HCT116 (cell line): ENCODE measurements at regions of chr3 and their contacts with region 1.

Region 1: GRCh38 chr3:114827495-114827894 is 319.6 kb downstream of the ZBTB20 start:
- DNase-seq: peak; percentile 60
- ATAC-seq: peak; percentile 91
- H3K4me3 ChIP-seq: no peak overlapping the region
- H3K27ac ChIP-seq: no peak overlapping the region
- H3K4me1 ChIP-seq: peaks cover 11 to 13% of the 10 kb centered on the region in 2 experiments; a peak in 2 of 4 replicates
- H3K27me3 ChIP-seq: no peaks in the 10 kb centered on the region
- CTCF ChIP-seq: peak; percentile 46 to 76 (median 66); a peak in 5 of 6 replicates
- POLR2A ChIP-seq: no peak
- RAD21 ChIP-seq: peak; percentile 78

Region 2: GRCh38 chr3:114383875-114384557 is 443.5 kb before region 1 on chr3:
- CTCF ChIA-PET with region 1: interaction called, 4 read pairs
- POLR2A ChIA-PET with region 1: no interaction called
- RAD21 ChIA-PET with region 1: no interaction called
- intact Hi-C with region 1: loop called (anchors 2 kb)
- DNase-seq: peak; percentile 47
- ATAC-seq: peak; percentile 85
- H3K4me3 ChIP-seq: no peak overlapping the region
- H3K27ac ChIP-seq: peak overlapping the region; percentile 41; the same call in 1 of the 2 replicates
- H3K4me1 ChIP-seq: peaks cover 26 to 58% of the 10 kb centered on the region in 2 experiments
- H3K27me3 ChIP-seq: no peaks in the 10 kb centered on the region
- CTCF ChIP-seq: peak; percentile 52 to 95 (median 94); a peak in 5 of 6 replicates
- POLR2A ChIP-seq: no peak
- RAD21 ChIP-seq: peak; percentile 92

Region 3: GRCh38 chr3:114668099-114668498 is 159.4 kb before region 1 on chr3:
- CTCF ChIA-PET with region 1: no interaction called
- POLR2A ChIA-PET with region 1: no interaction called
- RAD21 ChIA-PET with region 1: no interaction called
- intact Hi-C with region 1: no loop called
- DNase-seq: no peak
- ATAC-seq: no peak
- H3K4me3 ChIP-seq: no peak overlapping the region
- H3K27ac ChIP-seq: no peak overlapping the region
- H3K4me1 ChIP-seq: peaks cover 19 to 45% of the 10 kb centered on the region in 2 experiments; a peak in 3 of 4 replicates
- H3K27me3 ChIP-seq: no peaks in the 10 kb centered on the region
- CTCF ChIP-seq: no peak
- POLR2A ChIP-seq: no peak
- RAD21 ChIP-seq: no peak

Region 4: DNA sequence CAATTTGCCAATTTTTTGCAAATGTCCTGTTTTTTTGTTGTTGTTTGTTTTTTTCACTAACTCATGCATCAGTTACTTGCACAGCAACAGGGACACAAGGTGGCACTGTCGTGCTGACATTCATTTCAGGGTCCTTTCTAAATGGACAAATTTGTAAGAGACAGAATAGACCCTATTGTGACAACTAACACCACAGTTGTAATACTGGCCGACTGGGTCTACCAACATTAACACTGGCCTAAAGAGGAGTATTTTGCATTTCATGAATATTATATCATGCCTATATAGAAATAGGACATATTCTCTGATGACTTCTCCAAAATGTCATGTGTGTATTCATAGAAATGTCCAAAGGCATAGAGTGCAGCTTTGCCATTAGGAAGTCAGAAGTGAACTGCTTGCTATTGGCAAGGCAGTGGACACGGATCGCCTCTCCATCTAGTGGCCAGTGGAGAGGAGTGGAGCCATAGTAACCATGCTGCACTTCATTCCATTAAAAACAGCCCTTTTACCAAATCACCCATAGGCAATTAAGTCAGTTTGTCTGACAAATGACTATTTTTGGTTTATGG is 264.8 kb after region 1 on chr3:
- CTCF ChIA-PET with region 1: interaction called, 3 read pairs
- POLR2A ChIA-PET with region 1: no interaction called
- RAD21 ChIA-PET with region 1: no interaction called
- intact Hi-C with region 1: loop called (anchors 1 kb)
- DNase-seq: peak; percentile 65
- ATAC-seq: peak; percentile 99
- H3K4me3 ChIP-seq: no peak overlapping the region
- H3K27ac ChIP-seq: peak overlapping the region; percentile 3; the same call in 1 of the 2 replicates
- H3K4me1 ChIP-seq: peaks cover 2 to 9% of the 10 kb centered on the region in 2 experiments; a peak in 2 of 4 replicates
- H3K27me3 ChIP-seq: no peaks in the 10 kb centered on the region
- CTCF ChIP-seq: peak; percentile 65 to 81 (median 68)
- POLR2A ChIP-seq: no peak
- RAD21 ChIP-seq: peak; percentile 61

Region 5: GRCh38 chr3:115217678-115218451 is 390.4 kb after region 1 on chr3:
- CTCF ChIA-PET with region 1: interaction called, 8 read pairs
- POLR2A ChIA-PET with region 1: no interaction called
- RAD21 ChIA-PET with region 1: no interaction called
- intact Hi-C with region 1: loop called (anchors 2 kb)
- DNase-seq: peak; percentile 42
- ATAC-seq: peak; percentile 91
- H3K4me3 ChIP-seq: no peak overlapping the region
- H3K27ac ChIP-seq: no peak overlapping the region
- H3K4me1 ChIP-seq: peaks cover 0 to 11% of the 10 kb centered on the region in 2 experiments; a peak in 2 of 4 replicates
- H3K27me3 ChIP-seq: no peaks in the 10 kb centered on the region
- CTCF ChIP-seq: peak; percentile 59 to 87 (median 85)
- POLR2A ChIP-seq: no peak
- RAD21 ChIP-seq: peak; percentile 92

Region 6: DNA sequence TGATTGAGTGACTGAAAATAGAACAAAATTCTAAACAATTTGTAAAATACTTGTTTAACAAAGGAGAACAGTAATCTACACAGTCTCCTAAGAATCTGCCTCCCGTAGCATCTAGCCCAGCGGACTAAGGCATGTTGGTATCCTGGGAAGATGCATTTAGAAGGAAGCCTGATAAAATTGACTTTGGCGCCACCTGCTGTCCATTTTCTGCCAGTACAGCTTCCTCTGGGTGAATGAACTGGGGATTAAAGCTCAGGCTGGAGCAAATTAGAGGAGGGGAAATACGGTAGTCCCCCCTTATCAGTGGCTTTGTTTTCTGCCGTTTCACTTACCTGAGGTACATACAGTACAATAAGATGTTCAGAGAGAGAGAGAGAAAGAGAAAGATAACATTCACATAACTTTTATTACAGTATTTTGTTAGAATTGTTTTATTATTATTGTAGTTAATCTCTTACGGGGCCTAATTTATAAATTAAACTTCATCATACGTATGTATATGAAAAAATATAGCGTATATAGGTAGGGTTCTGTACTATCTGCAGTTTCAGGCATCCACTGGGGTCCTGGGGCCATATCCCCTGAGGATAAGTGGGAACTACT is 987.4 kb after region 1 on chr3:
- CTCF ChIA-PET with region 1: interaction called, 3 read pairs
- POLR2A ChIA-PET with region 1: no interaction called
- RAD21 ChIA-PET with region 1: no interaction called
- intact Hi-C with region 1: loop called (anchors 2 kb)
- DNase-seq: peak; percentile 59
- ATAC-seq: peak; percentile 93
- H3K4me3 ChIP-seq: no peak overlapping the region
- H3K27ac ChIP-seq: no peak overlapping the region
- H3K4me1 ChIP-seq: no peaks in the 10 kb centered on the region
- H3K27me3 ChIP-seq: no peaks in the 10 kb centered on the region
- CTCF ChIP-seq: peak; percentile 71 to 94 (median 81); a peak in 5 of 6 replicates
- POLR2A ChIP-seq: no peak
- RAD21 ChIP-seq: peak; percentile 94